PC-3 (cell line): ENCODE measurements at regions of chr2 and their contacts with region 1.

Region 1: DNA sequence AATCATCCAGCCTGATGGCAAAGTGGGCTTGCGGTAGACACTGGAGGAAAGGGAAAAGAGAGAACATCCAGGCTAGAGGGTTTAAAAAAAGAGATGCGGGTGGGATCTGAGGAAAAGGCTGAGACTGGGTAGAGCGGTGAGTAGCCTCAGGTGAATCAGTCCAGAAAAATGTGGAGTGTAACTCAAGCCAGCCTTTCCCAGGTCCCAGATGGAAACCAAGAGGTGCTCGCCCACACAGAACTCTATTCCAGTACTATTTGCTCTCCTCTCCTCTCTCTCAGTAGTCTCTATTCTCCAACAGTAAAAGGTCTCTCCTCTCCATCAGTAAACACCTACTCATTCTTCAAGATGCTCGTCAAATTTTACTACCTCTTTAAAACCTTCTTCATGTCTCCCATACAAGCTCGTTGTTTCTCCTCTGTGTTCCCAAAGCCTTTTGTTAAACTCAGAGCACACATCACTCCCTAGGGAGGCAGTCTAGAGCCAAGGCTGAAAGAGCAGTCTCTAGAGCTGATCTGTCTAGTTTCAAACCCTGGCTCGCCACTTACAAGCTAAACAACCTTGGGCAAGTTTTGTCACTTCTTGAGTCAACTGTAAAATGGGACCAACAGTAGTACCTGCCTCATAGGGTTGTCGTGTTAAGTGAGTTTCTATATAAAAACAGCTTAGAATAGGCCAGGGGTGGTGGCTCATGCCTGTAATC is 38.1 kb upstream of the NRP2 start:
- DNase-seq: peak; percentile 68
- ATAC-seq: peak; percentile 60
- H3K4me3 ChIP-seq: no peak overlapping the region
- H3K27ac ChIP-seq: 0 out of 2 replicates have a peak overlapping the region, but pooled peaks have one; percentile 5
- H3K4me1 ChIP-seq: peaks cover 4% of the 10 kb centered on the region
- H3K27me3 ChIP-seq: no peaks in the 10 kb centered on the region
- CTCF ChIP-seq: no peak

Region 2: DNA sequence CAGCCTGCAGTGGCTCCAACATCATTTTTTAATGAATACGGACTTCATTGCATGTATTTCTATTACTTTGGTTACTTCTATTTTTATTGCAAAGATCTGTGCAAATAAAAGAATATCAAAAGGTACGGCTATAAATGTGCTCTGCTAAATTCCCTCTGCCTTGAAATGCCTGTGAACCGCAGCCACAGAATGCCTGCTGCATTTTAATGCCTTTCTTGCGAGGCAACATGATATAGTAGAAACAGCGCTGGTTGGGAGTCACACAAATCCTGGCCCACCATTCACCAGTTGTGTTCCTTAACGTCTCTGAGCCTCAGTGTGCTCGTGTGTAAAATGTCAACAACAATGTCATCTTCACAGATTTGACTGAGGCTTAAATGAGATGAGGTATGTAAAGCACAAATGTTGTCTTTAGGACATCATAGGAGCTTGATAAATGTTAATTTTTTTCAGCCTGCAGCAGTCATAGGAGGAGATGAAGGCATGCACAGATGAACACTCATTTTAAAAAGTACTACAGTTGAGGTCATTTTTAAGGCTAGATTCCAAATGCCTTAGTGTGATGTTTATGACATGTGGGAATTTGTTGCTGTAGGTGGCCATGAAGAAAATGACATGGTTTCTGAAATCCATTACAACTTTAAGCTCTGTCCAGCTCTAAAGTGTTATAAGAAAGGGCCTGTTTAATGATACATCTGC is 149.5 kb before region 1 on chr2:
- CTCF ChIA-PET with region 1: no interaction called
- POLR2A ChIA-PET with region 1: interaction called, 15 read pairs
- intact Hi-C with region 1: no loop called
- DNase-seq: no peak
- ATAC-seq: no peak
- H3K4me3 ChIP-seq: no peak overlapping the region
- H3K27ac ChIP-seq: no peak overlapping the region
- H3K4me1 ChIP-seq: no peaks in the 10 kb centered on the region
- H3K27me3 ChIP-seq: no peaks in the 10 kb centered on the region
- CTCF ChIP-seq: no peak

Region 3: DNA sequence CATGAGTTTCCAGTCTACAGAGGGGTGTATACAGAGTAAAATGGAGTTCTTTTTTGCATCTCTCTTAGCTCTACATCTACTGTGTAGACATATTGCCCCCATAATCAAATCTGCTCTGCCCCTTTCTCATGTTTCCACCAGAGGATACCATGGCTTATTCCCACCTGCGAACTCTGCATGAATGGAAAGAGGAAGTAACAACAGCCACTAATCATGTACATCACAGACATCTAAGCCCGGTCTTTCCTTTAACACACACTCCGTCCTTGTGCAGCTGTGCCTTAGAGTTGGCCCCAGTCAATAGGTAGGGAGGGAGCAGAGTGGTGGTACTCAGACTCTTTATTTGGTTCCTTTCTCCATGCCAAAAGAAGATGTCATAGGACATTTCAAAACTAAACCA is 109.2 kb before region 1 on chr2:
- CTCF ChIA-PET with region 1: no interaction called
- POLR2A ChIA-PET with region 1: no interaction called
- intact Hi-C with region 1: no loop called
- DNase-seq: no peak
- ATAC-seq: no peak
- H3K4me3 ChIP-seq: no peak overlapping the region
- H3K27ac ChIP-seq: no peak overlapping the region
- H3K4me1 ChIP-seq: no peaks in the 10 kb centered on the region
- H3K27me3 ChIP-seq: no peaks in the 10 kb centered on the region
- CTCF ChIP-seq: no peak

Region 4: GRCh38 chr2:205957452-205958154 is 313.4 kb after region 1 on chr2:
- CTCF ChIA-PET with region 1: no interaction called
- POLR2A ChIA-PET with region 1: no interaction called
- intact Hi-C with region 1: no loop called
- DNase-seq: no peak
- ATAC-seq: no peak
- H3K4me3 ChIP-seq: no peak overlapping the region
- H3K27ac ChIP-seq: no peak overlapping the region
- H3K4me1 ChIP-seq: no peaks in the 10 kb centered on the region
- H3K27me3 ChIP-seq: peaks cover 11% of the 10 kb centered on the region; the same call in 1 of the 2 replicates
- CTCF ChIP-seq: no peak